MCF 10A (cell line): ENCODE measurements at regions of chr6 and their contacts with region 1.

Region 1: DNA sequence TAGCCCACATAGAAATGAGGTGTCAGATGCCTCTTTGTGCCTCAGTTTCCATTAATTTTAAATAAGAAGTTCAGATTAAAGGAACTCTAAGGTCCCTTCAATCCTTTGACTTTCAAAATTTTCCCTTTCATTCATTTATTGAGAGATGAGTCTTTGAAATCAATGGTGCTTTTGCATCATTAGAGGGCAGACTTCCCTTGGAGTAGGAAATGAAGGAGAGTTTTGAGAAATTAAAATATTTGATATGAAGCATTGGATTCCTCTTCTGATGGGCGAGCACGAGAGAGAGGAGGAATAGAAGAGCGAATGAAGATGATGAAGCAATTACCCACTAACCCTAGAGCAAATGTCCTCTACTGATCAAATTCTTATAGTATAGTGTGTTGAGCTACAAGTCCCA is 105.7 kb downstream of the EDN1 start:
- DNase-seq: no peak
- H3K4me3 Mint-ChIP-seq: no peak overlapping the region
- H3K27ac Mint-ChIP-seq: no peak overlapping the region
- H3K4me1 Mint-ChIP-seq: no peaks in the 10 kb centered on the region
- H3K27me3 Mint-ChIP-seq: no peaks in the 10 kb centered on the region
- CTCF ChIP-seq: no peak

Region 2: GRCh38 chr6:12241493-12242175 is 154.3 kb before region 1 on chr6:
- CTCF ChIA-PET with region 1: no interaction called
- POLR2A ChIA-PET with region 1: no interaction called
- intact Hi-C with region 1: no loop called
- DNase-seq: no peak
- H3K4me3 Mint-ChIP-seq: no peak overlapping the region
- H3K27ac Mint-ChIP-seq: no peak overlapping the region
- H3K4me1 Mint-ChIP-seq: peaks cover 5% of the 10 kb centered on the region
- H3K27me3 Mint-ChIP-seq: no peaks in the 10 kb centered on the region
- CTCF ChIP-seq: no peak

Region 3: DNA sequence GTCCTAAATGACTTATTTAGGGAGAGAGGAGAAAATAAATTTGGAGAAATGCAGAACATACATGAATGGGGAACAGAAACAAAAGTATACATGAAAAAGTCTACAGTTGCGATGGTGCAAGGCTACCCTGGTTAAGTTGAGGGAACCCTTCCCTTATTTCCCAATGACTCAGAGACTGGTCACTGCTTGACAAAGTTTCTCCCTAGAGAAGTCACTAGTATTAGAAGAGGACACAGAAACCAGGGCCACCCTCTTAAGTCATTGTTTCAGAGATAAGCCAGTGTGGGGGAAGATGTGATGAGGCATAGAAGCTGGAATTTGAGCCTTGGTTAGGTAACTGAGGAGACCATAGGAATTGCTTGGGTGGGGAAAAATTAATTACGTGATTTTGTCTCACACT is 130.1 kb before region 1 on chr6:
- CTCF ChIA-PET with region 1: no interaction called
- POLR2A ChIA-PET with region 1: no interaction called
- intact Hi-C with region 1: no loop called
- DNase-seq: peak; percentile 70
- H3K4me3 Mint-ChIP-seq: no peak overlapping the region
- H3K27ac Mint-ChIP-seq: peak overlapping the region; percentile 1
- H3K4me1 Mint-ChIP-seq: peaks cover 25% of the 10 kb centered on the region
- H3K27me3 Mint-ChIP-seq: no peaks in the 10 kb centered on the region
- CTCF ChIP-seq: no peak

Region 4: GRCh38 chr6:12504319-12504966 is 108.5 kb after region 1 on chr6:
- CTCF ChIA-PET with region 1: no interaction called
- POLR2A ChIA-PET with region 1: no interaction called
- intact Hi-C with region 1: loop called (anchors 10 kb)
- DNase-seq: peak; percentile 61
- H3K4me3 Mint-ChIP-seq: no peak overlapping the region
- H3K27ac Mint-ChIP-seq: no peak overlapping the region
- H3K4me1 Mint-ChIP-seq: peaks cover 7% of the 10 kb centered on the region
- H3K27me3 Mint-ChIP-seq: no peaks in the 10 kb centered on the region
- CTCF ChIP-seq: peak; percentile 55